ENCODE measurements at regions of chr3 and their contacts with region 1.

Region 1: DNA sequence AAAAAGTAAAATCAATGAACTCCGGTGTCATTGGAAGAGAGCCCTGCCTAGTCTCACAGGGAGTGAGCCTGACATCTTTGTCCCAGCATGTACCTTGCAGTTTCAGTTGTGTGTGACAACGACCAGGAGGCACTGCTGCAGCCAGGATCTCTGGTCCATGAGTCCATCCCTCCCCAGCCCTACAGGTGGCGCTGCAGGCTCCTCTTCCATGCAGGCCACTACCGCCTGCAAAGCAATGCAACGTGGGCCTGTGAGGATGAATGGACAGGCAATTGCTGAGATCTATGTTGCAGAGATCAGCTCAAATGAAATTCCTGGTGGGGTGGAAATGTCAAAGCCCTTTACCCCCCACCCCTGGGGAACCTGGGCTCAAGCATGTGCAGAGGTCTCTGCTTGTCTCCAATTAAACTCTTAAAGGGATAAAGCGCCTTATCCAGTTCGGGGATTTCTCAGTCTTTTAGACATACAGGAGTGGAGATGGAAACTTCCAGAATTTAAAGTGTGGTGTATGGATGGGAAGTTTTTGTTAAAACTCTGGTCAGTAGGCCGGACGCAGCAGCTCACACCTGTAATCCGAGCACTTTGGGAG is 35.8 kb downstream of the TKT start:
- DNase-seq: peak; percentile 89
- H3K4me3 ChIP-seq: no peak overlapping the region
- H3K27ac ChIP-seq: no peak overlapping the region
- H3K4me1 ChIP-seq: peaks cover 0 to 3% (median 0%) of the 10 kb centered on the region in 4 donors
- H3K27me3 ChIP-seq: no peaks in the 10 kb centered on the region
- CTCF ChIP-seq: peak; percentile 74 to 85 (median 83)
- EP300 ChIP-seq: no peak
- POLR2A ChIP-seq: no peak

Region 2: GRCh38 chr3:53303957-53304356 is 84.0 kb after region 1 on chr3:
- intact Hi-C with region 1: loop called (anchors 5 kb)
- DNase-seq: no peak
- H3K4me3 ChIP-seq: no peak overlapping the region
- H3K27ac ChIP-seq: peak overlapping the region in 3 of 4 donors; percentile 21 to 31 (median 29)
- H3K4me1 ChIP-seq: peaks cover 0 to 23% (median 19%) of the 10 kb centered on the region in 4 donors
- H3K27me3 ChIP-seq: no peaks in the 10 kb centered on the region
- CTCF ChIP-seq: no peak
- EP300 ChIP-seq: no peak
- POLR2A ChIP-seq: no peak

Measured in sigmoid colon (tissue), 7 donors.